Activated CD4-positive, alpha-beta memory T cell treated with anti-CD3 and anti-CD28 coated beads, Interleukin-2, amount 10 ng/mL, durations not matched to agents 7 days and 5 days (primary cell): ENCODE measurements at regions of chr11 and their contacts with region 1.

Region 1: GRCh38 chr11:207208-207862 is at the starts of genes BET1L and RIC8A:
- DNase-seq: peak; percentile 98
- H3K4me3 Mint-ChIP-seq: peak within 1 kb of the TSS; percentile 96
- H3K27ac Mint-ChIP-seq: peak within 1 kb of the TSS; percentile 100
- H3K4me1 Mint-ChIP-seq: peaks cover 55% of the 10 kb centered on the region
- H3K27me3 Mint-ChIP-seq: no peaks in the 10 kb centered on the region
- total RNA-seq, gene BET1L: 39.3 to 44.5 TPM
- total RNA-seq, gene RIC8A: 98.7 to 103 TPM

Region 2: GRCh38 chr11:236774-237767 is 29.7 kb after region 1 on chr11 and contains the start of gene PSMD13:
- CTCF ChIA-PET with region 1: interaction called, 6 read pairs
- POLR2A ChIA-PET with region 1: interaction called, 51 read pairs
- DNase-seq: peak; percentile 90
- H3K4me3 Mint-ChIP-seq: peak within 1 kb of the TSS; percentile 92
- H3K27ac Mint-ChIP-seq: peak within 1 kb of the TSS; percentile 98
- H3K4me1 Mint-ChIP-seq: peaks cover 49% of the 10 kb centered on the region
- H3K27me3 Mint-ChIP-seq: no peaks in the 10 kb centered on the region
- total RNA-seq, gene PSMD13: 156 to 160 TPM

Region 3: DNA sequence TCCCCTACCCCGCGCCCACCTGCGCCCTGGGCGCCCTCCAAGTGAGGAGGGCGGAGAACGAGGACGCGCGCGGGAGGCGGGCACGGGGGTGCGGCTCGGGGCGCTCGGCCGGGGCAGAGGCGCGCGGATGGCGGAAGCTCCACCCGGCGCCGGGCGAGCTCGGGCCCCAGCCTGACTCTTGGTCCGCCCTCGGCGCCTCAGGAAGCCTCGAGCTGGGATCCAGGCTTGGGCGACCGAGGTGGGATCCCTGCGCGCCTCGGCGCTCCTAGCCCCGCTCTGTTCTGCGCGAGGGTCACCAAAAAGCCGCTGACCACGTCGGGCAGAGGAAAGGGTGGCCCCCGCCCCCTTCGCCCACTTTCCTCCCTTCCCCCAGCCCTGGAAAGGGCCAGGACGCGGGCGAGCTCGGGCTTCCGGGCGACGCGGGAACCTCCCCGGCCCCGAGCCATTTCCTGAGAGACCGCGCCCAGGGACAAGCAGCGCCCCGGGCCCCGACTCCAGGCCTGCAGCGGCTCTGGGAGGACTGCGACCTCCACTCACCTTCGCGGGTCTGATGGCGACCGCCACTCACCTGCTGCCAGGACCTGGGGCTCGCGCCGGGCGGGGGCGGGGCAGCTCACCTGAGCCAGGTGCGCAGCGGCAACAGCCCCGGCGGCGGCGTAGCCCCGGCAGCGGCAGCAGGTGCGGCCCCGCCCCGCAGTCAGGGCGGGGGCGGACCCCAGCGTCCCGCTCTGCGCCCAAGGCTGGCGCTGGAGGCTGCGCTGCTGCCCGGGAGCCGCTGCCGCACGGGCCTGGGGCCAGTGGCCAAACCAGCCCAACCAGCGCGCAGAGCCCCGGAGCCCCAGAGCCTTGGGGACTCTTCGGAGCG is 209.7 kb after region 1 on chr11:
- CTCF ChIA-PET with region 1: interaction called, 6 read pairs
- POLR2A ChIA-PET with region 1: interaction called, 19 read pairs
- DNase-seq: peak; percentile 67
- H3K4me3 Mint-ChIP-seq: peak overlapping the region; percentile 99
- H3K27ac Mint-ChIP-seq: peak overlapping the region; percentile 91
- H3K4me1 Mint-ChIP-seq: peaks cover 30% of the 10 kb centered on the region
- H3K27me3 Mint-ChIP-seq: no peaks in the 10 kb centered on the region

Region 4: DNA sequence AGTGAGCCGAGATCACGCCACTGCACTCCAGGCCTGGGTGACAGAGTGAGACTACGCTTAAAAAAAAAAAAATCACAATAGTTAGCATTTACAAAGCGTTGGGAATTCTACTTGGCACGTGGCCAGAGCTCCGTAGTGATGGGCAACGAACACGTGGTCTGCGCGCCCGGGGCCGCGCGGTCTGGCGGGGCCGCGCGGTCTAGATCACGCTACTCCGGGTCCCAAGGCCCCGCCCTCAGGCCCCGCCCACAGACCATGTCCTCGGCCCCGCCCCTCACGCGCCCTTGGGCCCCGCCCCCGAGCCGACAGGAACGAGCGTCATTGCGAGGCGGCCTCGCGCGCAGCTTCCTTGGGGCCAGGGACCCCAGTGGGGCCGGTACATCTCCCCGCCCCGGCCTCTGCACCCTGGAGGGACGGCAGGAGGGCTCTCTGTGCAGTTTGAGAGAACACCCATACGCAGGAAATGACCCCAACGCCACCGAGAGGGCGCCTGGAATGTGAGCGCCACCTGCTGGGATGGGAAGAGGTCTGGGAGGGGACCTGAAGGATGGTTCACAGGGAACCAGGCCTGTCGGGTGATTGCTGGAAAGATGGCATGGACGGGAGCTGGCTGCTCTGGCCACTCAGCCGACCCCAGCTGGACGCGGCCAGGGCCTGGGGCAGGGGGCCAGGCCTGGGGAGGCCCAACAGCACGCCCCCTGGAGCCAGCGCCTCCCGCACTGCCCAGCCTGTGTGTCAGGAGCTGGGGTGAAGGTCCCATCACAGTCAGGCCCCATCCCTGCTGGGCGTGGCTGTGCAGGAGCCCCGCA is 240.8 kb after region 1 on chr11:
- CTCF ChIA-PET with region 1: interaction called, 5 read pairs
- POLR2A ChIA-PET with region 1: interaction called, 19 read pairs
- DNase-seq: peak; percentile 96
- H3K4me3 Mint-ChIP-seq: peak overlapping the region; percentile 90
- H3K27ac Mint-ChIP-seq: peak overlapping the region; percentile 97
- H3K4me1 Mint-ChIP-seq: peaks cover 32% of the 10 kb centered on the region
- H3K27me3 Mint-ChIP-seq: peaks cover 9% of the 10 kb centered on the region

Region 5: GRCh38 chr11:506238-506994 is 299.1 kb after region 1 on chr11:
- CTCF ChIA-PET with region 1: interaction called, 4 read pairs
- POLR2A ChIA-PET with region 1: interaction called, 15 read pairs
- DNase-seq: peak; percentile 97
- H3K4me3 Mint-ChIP-seq: peak overlapping the region; percentile 95
- H3K27ac Mint-ChIP-seq: peak overlapping the region; percentile 99
- H3K4me1 Mint-ChIP-seq: peaks cover 40% of the 10 kb centered on the region
- H3K27me3 Mint-ChIP-seq: no peaks in the 10 kb centered on the region